ENCODE measurements at regions of chr7 and their contacts with region 1.

Region 1: GRCh38 chr7:102814025-102814471 is 65.2 kb downstream of the FAM185A start:
- DNase-seq: peak; percentile 72
- ATAC-seq: peak; percentile 91
- H3K4me3 ChIP-seq: no peak overlapping the region
- H3K27ac ChIP-seq: peak overlapping the region; percentile 19
- H3K4me1 ChIP-seq: peaks cover 15% of the 10 kb centered on the region
- H3K27me3 ChIP-seq: no peaks in the 10 kb centered on the region
- CTCF ChIP-seq: no peak

Region 2: GRCh38 chr7:102834999-102835398 is 21.0 kb after region 1 on chr7:
- CTCF ChIA-PET with region 1: no interaction called
- POLR2A ChIA-PET with region 1: no interaction called
- intact Hi-C with region 1: loop called (anchors 1 kb)
- DNase-seq: peak; percentile 81
- ATAC-seq: peak; percentile 87
- H3K4me3 ChIP-seq: peak overlapping the region; percentile 41; the same call in 1 of the 2 replicates
- H3K27ac ChIP-seq: peak overlapping the region; percentile 58
- H3K4me1 ChIP-seq: peaks cover 34% of the 10 kb centered on the region
- H3K27me3 ChIP-seq: no peaks in the 10 kb centered on the region
- CTCF ChIP-seq: no peak

Region 3: GRCh38 chr7:103009466-103010185 is 195.6 kb after region 1 on chr7:
- CTCF ChIA-PET with region 1: no interaction called
- POLR2A ChIA-PET with region 1: no interaction called
- intact Hi-C with region 1: no loop called
- DNase-seq: no peak
- ATAC-seq: no peak
- H3K4me3 ChIP-seq: no peak overlapping the region
- H3K27ac ChIP-seq: no peak overlapping the region
- H3K4me1 ChIP-seq: peaks cover 5% of the 10 kb centered on the region; the same call in 1 of the 2 replicates
- H3K27me3 ChIP-seq: no peaks in the 10 kb centered on the region
- CTCF ChIP-seq: no peak